Endothelial cell of umbilical vein (primary cell): ENCODE measurements at regions of chr5 and their contacts with region 1.

Region 1: GRCh38 chr5:142769741-142770631 is at the start of gene ARHGAP26:
- DNase-seq: peak; percentile 98
- H3K4me3 ChIP-seq: peak within 1 kb of the TSS; percentile 49 to 86 (median 74)
- H3K27ac ChIP-seq: peak within 1 kb of the TSS; percentile 33
- H3K4me1 ChIP-seq: peaks cover 10% of the 10 kb centered on the region
- H3K27me3 ChIP-seq: no peaks in the 10 kb centered on the region
- CTCF ChIP-seq: peak in 1 of 2 donors; percentile 61
- POLR2A ChIP-seq: peak; percentile 70
- total RNA-seq, gene ARHGAP26: 13.9 and 16.2 TPM in 2 replicates

Region 2: GRCh38 chr5:142053426-142054151 is 716.4 kb before region 1 on chr5:
- CTCF ChIA-PET with region 1: no interaction called
- POLR2A ChIA-PET with region 1: no interaction called
- dilution Hi-C with region 1: no loop called
- intact Hi-C with region 1: no loop called
- DNase-seq: peak; percentile 33
- H3K4me3 ChIP-seq: no peak overlapping the region
- H3K27ac ChIP-seq: no peak overlapping the region
- H3K4me1 ChIP-seq: peaks cover 10% of the 10 kb centered on the region
- H3K27me3 ChIP-seq: peaks cover 1 to 2% of the 10 kb centered on the region in 2 experiments
- CTCF ChIP-seq: no peak
- POLR2A ChIP-seq: no peak

Region 3: GRCh38 chr5:142720641-142721271 is 49.2 kb before region 1 on chr5:
- CTCF ChIA-PET with region 1: interaction called, 46 read pairs
- POLR2A ChIA-PET with region 1: no interaction called
- dilution Hi-C with region 1: no loop called
- intact Hi-C with region 1: loop called (anchors 1 kb)
- DNase-seq: no peak
- H3K4me3 ChIP-seq: no peak overlapping the region
- H3K27ac ChIP-seq: no peak overlapping the region
- H3K4me1 ChIP-seq: peaks cover 7% of the 10 kb centered on the region
- H3K27me3 ChIP-seq: peaks cover 0 to 9% of the 10 kb centered on the region in 2 experiments
- CTCF ChIP-seq: no peak
- POLR2A ChIP-seq: no peak

Region 4: GRCh38 chr5:142783601-142784341 is 13.8 kb after region 1 on chr5:
- CTCF ChIA-PET with region 1: interaction called, 19 read pairs
- POLR2A ChIA-PET with region 1: interaction called, 3 read pairs
- dilution Hi-C with region 1: no loop called
- intact Hi-C with region 1: no loop called
- DNase-seq: no peak
- H3K4me3 ChIP-seq: no peak overlapping the region
- H3K27ac ChIP-seq: no peak overlapping the region
- H3K4me1 ChIP-seq: peaks cover 8% of the 10 kb centered on the region
- H3K27me3 ChIP-seq: no peaks in the 10 kb centered on the region
- CTCF ChIP-seq: no peak
- POLR2A ChIP-seq: no peak

Region 5: GRCh38 chr5:142852416-142853198 is 82.6 kb after region 1 on chr5:
- CTCF ChIA-PET with region 1: interaction called, 13 read pairs
- POLR2A ChIA-PET with region 1: no interaction called
- dilution Hi-C with region 1: no loop called
- intact Hi-C with region 1: no loop called
- DNase-seq: no peak
- H3K4me3 ChIP-seq: no peak overlapping the region
- H3K27ac ChIP-seq: no peak overlapping the region
- H3K4me1 ChIP-seq: peaks cover 20% of the 10 kb centered on the region
- H3K27me3 ChIP-seq: no peaks in the 10 kb centered on the region
- CTCF ChIP-seq: no peak
- POLR2A ChIP-seq: no peak

Region 6: GRCh38 chr5:142874537-142874936 is 104.6 kb after region 1 on chr5:
- CTCF ChIA-PET with region 1: interaction called, 41 read pairs
- POLR2A ChIA-PET with region 1: no interaction called
- dilution Hi-C with region 1: no loop called
- intact Hi-C with region 1: loop called (anchors 2 kb)
- DNase-seq: peak; percentile 96
- H3K4me3 ChIP-seq: no peak overlapping the region
- H3K27ac ChIP-seq: peak overlapping the region; percentile 42
- H3K4me1 ChIP-seq: peaks cover 40% of the 10 kb centered on the region
- H3K27me3 ChIP-seq: no peaks in the 10 kb centered on the region
- CTCF ChIP-seq: no peak
- POLR2A ChIP-seq: no peak

Region 7: GRCh38 chr5:142888469-142889085 is 118.6 kb after region 1 on chr5:
- CTCF ChIA-PET with region 1: interaction called, 17 read pairs
- POLR2A ChIA-PET with region 1: no interaction called
- dilution Hi-C with region 1: no loop called
- intact Hi-C with region 1: no loop called
- DNase-seq: peak; percentile 55
- H3K4me3 ChIP-seq: no peak overlapping the region
- H3K27ac ChIP-seq: no peak overlapping the region
- H3K4me1 ChIP-seq: peaks cover 3% of the 10 kb centered on the region
- H3K27me3 ChIP-seq: no peaks in the 10 kb centered on the region
- CTCF ChIP-seq: peak; percentile 50 to 60
- POLR2A ChIP-seq: no peak